ENCODE measurements at regions of chr3 and their contacts with region 1.

Region 1: GRCh38 chr3:179604321-179605078 is at the starts of genes MRPL47 and NDUFB5:
- DNase-seq: peak; percentile 89 to 97 (median 92)
- H3K4me3 ChIP-seq: peak within 1 kb of the TSS; percentile 82 to 97
- H3K4me3 Mint-ChIP-seq: peak within 1 kb of the TSS; percentile 98 to 99 (median 99)
- H3K27ac ChIP-seq: peak within 1 kb of the TSS; percentile 97
- H3K27ac Mint-ChIP-seq: peak within 1 kb of the TSS; percentile 97 to 100 (median 99)
- H3K4me1 ChIP-seq: peaks cover 37% of the 10 kb centered on the region
- H3K4me1 Mint-ChIP-seq: peaks cover 23 to 56% (median 38%) of the 10 kb centered on the region in 4 donors
- H3K27me3 ChIP-seq: no peaks in the 10 kb centered on the region
- H3K27me3 Mint-ChIP-seq: no peaks in the 10 kb centered on the region
- total RNA-seq, gene MRPL47: 16.9 to 17.3 TPM
- total RNA-seq, gene NDUFB5: 55.7 to 63.6 TPM

Region 2: DNA sequence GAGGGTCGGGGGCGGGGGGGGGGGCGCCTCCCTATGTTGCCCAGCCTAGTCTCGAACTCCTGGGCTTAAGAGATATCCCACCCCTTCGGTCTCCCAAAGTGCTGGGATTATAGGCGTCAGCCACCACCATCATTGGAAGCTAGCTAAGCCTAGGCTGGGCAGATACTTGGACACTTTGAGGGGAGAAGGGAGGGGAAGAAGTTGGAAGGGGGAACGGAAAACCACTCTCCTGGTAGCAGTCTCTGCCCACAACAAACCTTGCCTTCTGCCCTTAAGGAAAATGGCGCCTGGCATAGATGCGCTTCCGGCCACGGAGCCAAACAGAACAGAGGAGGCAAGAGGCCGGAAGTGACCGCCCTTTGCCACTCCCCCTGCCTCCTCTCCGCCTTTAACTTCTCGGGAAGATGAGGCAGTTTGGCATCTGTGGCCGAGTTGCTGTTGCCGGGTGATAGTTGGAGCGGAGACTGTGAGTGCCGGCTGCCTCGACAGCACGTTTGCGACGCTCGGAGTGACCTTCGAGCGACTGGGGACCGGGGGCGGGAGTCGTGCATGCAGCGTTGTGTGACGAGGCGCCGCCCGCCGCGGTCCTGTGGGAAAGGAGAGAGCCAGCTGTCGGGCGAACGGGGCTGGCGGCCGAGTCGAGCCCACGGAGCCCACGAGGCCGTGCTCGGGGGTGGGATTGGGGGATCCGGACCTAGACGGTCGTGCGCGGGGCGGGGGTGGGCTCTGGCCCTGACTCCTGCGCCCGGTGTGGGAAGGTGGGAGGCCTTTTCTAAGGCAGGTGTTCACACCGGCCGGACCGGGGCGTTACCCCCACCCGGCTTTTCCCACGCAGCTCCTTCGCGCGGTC is 256.9 kb before region 1 on chr3 and contains the start of gene MFN1:
- CTCF ChIA-PET with region 1: no interaction called
- POLR2A ChIA-PET with region 1: interaction called, 4 read pairs
- intact Hi-C with region 1: loop called (anchors 1 kb)
- DNase-seq: peak; percentile 86 to 94 (median 89)
- H3K4me3 ChIP-seq: peak within 1 kb of the TSS; percentile 92 to 97
- H3K4me3 Mint-ChIP-seq: peak within 1 kb of the TSS; percentile 93 to 100 (median 98)
- H3K27ac ChIP-seq: peak within 1 kb of the TSS; percentile 72
- H3K27ac Mint-ChIP-seq: peak within 1 kb of the TSS; percentile 86 to 99 (median 95)
- H3K4me1 ChIP-seq: peaks cover 21% of the 10 kb centered on the region
- H3K4me1 Mint-ChIP-seq: peaks cover 16 to 31% (median 24%) of the 10 kb centered on the region in 4 donors
- H3K27me3 ChIP-seq: no peaks in the 10 kb centered on the region
- H3K27me3 Mint-ChIP-seq: no peaks in the 10 kb centered on the region
- total RNA-seq, gene MFN1: 52.0 to 58.3 TPM

Region 3: DNA sequence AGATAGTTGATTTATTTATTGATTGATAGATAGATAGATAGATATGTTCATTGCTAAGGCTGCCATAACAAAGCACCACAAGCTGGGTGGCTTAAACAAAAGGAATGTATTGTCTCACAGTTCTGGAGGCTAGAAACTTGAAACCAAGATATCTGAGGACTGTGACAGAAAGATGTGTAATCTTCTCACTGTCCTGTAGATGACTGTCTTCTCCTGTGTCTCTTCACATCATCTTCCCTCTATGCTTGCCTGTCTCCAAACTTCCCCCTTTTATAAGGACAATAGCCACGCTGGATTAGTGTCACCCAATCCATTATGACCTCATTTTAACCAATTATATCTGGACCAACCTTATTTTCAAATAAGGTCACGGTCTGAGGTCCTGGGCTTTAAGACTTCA is 194.2 kb before region 1 on chr3:
- CTCF ChIA-PET with region 1: no interaction called
- POLR2A ChIA-PET with region 1: no interaction called
- intact Hi-C with region 1: no loop called
- DNase-seq: no peak
- H3K4me3 ChIP-seq: no peak overlapping the region
- H3K4me3 Mint-ChIP-seq: no peak overlapping the region
- H3K27ac ChIP-seq: no peak overlapping the region
- H3K27ac Mint-ChIP-seq: no peak overlapping the region
- H3K4me1 ChIP-seq: no peaks in the 10 kb centered on the region
- H3K4me1 Mint-ChIP-seq: no peaks in the 10 kb centered on the region
- H3K27me3 ChIP-seq: no peaks in the 10 kb centered on the region
- H3K27me3 Mint-ChIP-seq: peaks cover 0 to 2% of the 10 kb centered on the region in 2 donors

Region 4: DNA sequence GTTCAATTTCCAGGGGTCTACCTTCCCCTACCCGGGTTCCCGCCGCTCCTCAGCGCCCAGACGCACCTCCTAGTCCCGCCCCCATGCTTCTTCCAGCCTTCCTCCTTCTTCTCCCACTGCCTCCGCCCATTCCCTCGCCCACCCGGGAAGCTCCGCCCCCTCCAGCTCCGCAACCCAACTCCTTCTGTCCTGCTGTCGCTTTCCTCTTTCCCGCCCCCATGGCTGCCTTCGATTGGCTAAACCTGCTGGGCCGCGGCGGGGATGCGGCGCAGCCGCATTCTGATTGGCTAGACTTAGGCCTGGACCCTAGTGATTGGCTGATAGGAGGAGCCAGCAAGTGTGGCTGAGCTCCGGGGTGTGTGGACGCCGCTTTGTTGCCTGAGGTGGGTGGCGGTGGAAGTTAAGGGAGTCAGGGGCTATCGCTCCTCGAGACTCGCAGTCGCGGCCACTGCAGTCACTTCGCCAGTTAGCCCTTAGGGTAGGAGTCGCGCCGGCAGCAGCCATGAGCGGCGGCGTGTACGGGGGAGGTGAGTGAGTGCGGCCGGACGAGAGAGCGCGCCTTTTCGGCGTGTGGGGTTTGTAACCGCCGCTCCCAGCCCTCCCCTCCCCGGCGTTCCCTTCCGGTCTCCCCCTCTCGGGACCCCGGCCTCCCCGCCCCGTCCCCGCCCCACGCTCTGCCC is 41.8 kb before region 1 on chr3 and contains the start of gene ACTL6A:
- CTCF ChIA-PET with region 1: no interaction called
- POLR2A ChIA-PET with region 1: interaction called, 12 read pairs
- intact Hi-C with region 1: loop called (anchors 1 kb)
- DNase-seq: peak; percentile 96 to 98 (median 96)
- H3K4me3 ChIP-seq: peak within 1 kb of the TSS; percentile 67 to 76
- H3K4me3 Mint-ChIP-seq: peak within 1 kb of the TSS; percentile 96 to 100 (median 99)
- H3K27ac ChIP-seq: peak within 1 kb of the TSS; percentile 58
- H3K27ac Mint-ChIP-seq: peak within 1 kb of the TSS; percentile 81 to 98 (median 97)
- H3K4me1 ChIP-seq: peaks cover 29% of the 10 kb centered on the region
- H3K4me1 Mint-ChIP-seq: peaks cover 22 to 37% (median 28%) of the 10 kb centered on the region in 4 donors
- H3K27me3 ChIP-seq: no peaks in the 10 kb centered on the region
- H3K27me3 Mint-ChIP-seq: peaks cover 0 to 4% of the 10 kb centered on the region in 2 donors
- total RNA-seq, gene ACTL6A: 56.9 to 62.4 TPM

Region 5: DNA sequence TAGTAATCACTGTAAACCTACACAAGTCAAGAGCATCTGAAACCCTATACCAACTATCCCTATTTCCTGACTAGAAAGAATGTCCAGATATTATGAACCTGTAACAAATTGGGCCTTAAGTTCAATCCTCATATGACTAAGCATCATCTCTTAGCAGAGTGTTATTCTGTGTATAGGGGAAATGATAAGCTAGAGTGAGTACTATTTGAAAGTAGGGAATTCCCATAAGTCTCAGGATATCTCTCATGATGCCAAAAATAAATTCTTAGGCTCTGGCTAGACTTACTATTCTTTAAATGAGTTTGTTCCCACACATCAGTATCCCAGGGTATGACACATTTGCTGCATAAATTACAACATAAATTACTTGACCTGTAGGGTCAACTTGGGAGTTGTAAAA is 15.4 kb before region 1 on chr3:
- CTCF ChIA-PET with region 1: no interaction called
- POLR2A ChIA-PET with region 1: no interaction called
- intact Hi-C with region 1: no loop called
- DNase-seq: no peak
- H3K4me3 ChIP-seq: no peak overlapping the region
- H3K4me3 Mint-ChIP-seq: no peak overlapping the region
- H3K27ac ChIP-seq: no peak overlapping the region
- H3K27ac Mint-ChIP-seq: peak overlapping the region in 3 of 7 donors; percentile 0 to 41 (median 18)
- H3K4me1 ChIP-seq: no peaks in the 10 kb centered on the region
- H3K4me1 Mint-ChIP-seq: peaks cover 0 to 2% (median 0%) of the 10 kb centered on the region in 4 donors
- H3K27me3 ChIP-seq: no peaks in the 10 kb centered on the region
- H3K27me3 Mint-ChIP-seq: no peaks in the 10 kb centered on the region

Region 6: GRCh38 chr3:179642871-179643270 is 38.4 kb after region 1 on chr3:
- CTCF ChIA-PET with region 1: no interaction called
- POLR2A ChIA-PET with region 1: no interaction called
- intact Hi-C with region 1: no loop called
- DNase-seq: no peak
- H3K4me3 ChIP-seq: no peak overlapping the region
- H3K4me3 Mint-ChIP-seq: no peak overlapping the region
- H3K27ac ChIP-seq: no peak overlapping the region
- H3K27ac Mint-ChIP-seq: peak overlapping the region in 1 of 7 donors; percentile 4
- H3K4me1 ChIP-seq: no peaks in the 10 kb centered on the region
- H3K4me1 Mint-ChIP-seq: no peaks in the 10 kb centered on the region
- H3K27me3 ChIP-seq: no peaks in the 10 kb centered on the region
- H3K27me3 Mint-ChIP-seq: no peaks in the 10 kb centered on the region

Region 7: GRCh38 chr3:179706233-179706632 is 101.7 kb after region 1 on chr3:
- CTCF ChIA-PET with region 1: no interaction called
- POLR2A ChIA-PET with region 1: no interaction called
- intact Hi-C with region 1: no loop called
- DNase-seq: no peak
- H3K4me3 ChIP-seq: no peak overlapping the region
- H3K4me3 Mint-ChIP-seq: no peak overlapping the region
- H3K27ac ChIP-seq: no peak overlapping the region
- H3K27ac Mint-ChIP-seq: no peak overlapping the region
- H3K4me1 ChIP-seq: no peaks in the 10 kb centered on the region
- H3K4me1 Mint-ChIP-seq: no peaks in the 10 kb centered on the region
- H3K27me3 ChIP-seq: no peaks in the 10 kb centered on the region
- H3K27me3 Mint-ChIP-seq: no peaks in the 10 kb centered on the region

Region 8: DNA sequence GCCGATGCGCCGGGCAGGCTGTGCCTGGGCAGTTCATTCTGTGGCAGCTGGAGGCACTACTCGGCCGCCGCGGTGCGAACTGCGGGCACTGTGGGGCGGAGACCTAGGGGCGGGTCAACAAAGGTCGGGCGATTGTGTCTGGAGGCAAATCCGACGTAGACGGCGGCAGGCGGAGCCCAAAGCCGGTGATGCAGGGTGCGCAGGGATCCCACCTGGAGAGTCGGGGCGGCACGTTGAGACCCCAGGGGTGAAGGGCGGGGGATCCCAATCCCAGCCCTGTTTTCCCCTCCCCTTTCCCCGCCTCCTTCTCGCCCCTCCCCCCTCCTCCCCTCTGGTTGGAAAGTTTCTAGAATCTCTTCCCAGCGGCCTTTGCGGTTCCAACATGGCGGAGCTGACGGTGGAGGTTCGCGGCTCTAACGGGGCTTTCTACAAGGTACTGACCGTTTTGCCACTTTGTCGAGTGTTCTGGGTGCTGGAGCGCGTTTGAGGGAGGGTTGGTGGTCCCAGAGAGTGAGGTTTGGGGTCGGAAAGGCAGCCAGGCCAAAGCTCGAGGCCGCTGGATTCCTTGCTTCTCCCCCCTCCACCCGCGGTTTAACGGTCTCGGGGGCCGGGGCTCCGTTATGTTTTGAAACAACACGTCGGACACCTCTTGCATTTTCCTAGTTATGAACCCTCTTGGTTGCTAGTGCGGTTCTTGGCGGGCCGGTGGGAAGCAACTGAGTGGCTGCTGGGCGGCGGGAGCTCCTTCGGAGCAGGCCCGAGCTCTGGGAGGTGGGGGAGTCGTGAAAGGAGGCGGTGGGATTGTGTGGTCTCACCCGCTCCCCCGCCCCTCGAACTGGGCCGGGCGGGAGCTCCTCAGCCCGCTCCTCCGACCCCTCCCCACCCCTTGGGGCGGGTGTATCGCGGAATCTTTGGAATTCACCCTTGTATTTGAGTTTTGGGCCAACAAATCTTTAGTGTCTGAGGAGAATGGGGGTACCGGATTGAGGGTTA is 1308.1 kb after region 1 on chr3 and contains the start of gene FXR1:
- CTCF ChIA-PET with region 1: no interaction called
- POLR2A ChIA-PET with region 1: no interaction called
- intact Hi-C with region 1: loop called (anchors 10 kb)
- DNase-seq: peak; percentile 89 to 91 (median 90)
- H3K4me3 ChIP-seq: peak within 1 kb of the TSS; percentile 77 to 98
- H3K4me3 Mint-ChIP-seq: peak within 1 kb of the TSS; percentile 91 to 97 (median 96)
- H3K27ac ChIP-seq: peak within 1 kb of the TSS; percentile 98
- H3K27ac Mint-ChIP-seq: peak within 1 kb of the TSS; percentile 95 to 99 (median 98)
- H3K4me1 ChIP-seq: peaks cover 51% of the 10 kb centered on the region
- H3K4me1 Mint-ChIP-seq: peaks cover 38 to 69% (median 55%) of the 10 kb centered on the region in 4 donors
- H3K27me3 ChIP-seq: no peaks in the 10 kb centered on the region
- H3K27me3 Mint-ChIP-seq: no peaks in the 10 kb centered on the region
- total RNA-seq, gene FXR1: 131 TPM